PC-3 (cell line): ENCODE measurements at regions of chr2 and their contacts with region 1.

Region 1: DNA sequence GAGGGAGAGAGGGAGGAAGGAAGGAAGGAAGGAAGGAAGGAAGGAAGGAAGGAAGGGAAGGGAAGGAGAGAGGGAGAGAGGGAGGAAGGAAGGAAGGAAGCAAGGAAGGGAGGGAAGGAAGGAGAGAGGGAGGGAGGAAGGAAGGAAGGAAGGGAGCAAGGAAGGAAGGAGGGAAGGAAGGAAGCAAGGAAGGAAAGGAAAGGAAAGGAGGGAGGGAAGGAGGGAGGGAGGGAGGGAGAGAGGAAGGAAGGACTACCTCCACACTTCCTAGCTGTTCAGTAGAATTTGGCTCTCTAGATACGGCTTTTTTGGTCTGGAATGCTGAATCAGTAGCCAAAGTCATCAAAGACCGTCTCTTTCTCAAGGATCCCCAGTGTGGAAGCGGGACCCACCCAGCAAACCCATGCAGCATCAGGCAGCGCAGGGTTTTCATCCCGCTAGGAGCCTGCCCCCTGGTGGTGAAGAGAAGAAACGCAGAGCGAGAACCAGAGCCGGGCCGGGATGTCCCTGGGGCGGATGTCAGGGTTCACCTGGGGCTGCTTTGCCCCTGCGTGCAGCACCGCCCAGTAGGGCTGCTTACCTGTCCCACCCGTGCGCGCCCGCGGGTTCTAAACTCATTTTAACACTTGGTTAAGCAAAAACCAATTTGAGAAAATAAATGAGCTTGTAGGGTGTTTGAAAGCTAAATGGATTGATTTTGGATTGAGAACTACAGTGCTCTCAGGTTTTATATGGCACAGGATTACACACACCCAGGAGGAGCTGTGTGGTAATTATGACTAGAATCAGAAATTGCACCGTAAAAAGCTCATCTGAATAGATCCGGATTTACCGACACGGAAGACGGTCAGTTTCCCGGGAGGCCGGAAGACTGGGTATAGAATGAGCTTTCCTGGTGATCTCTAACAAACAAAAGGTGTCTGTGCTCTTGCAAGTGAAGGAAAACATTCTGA is 48.1 kb upstream of the ARL4C start:
- DNase-seq: peak; percentile 78
- ATAC-seq: peak; percentile 91
- H3K4me3 ChIP-seq: no peak overlapping the region
- H3K27ac ChIP-seq: no peak overlapping the region
- H3K4me1 ChIP-seq: peaks cover 5% of the 10 kb centered on the region; the same call in 1 of the 2 replicates
- H3K27me3 ChIP-seq: no peaks in the 10 kb centered on the region
- CTCF ChIP-seq: peak; percentile 86

Region 2: GRCh38 chr2:235116885-235117492 is 572.1 kb after region 1 on chr2:
- CTCF ChIA-PET with region 1: interaction called, 14 read pairs
- POLR2A ChIA-PET with region 1: no interaction called
- intact Hi-C with region 1: no loop called
- DNase-seq: peak; percentile 76
- ATAC-seq: no peak; the same call in 1 of the 2 replicates
- H3K4me3 ChIP-seq: no peak overlapping the region
- H3K27ac ChIP-seq: no peak overlapping the region
- H3K4me1 ChIP-seq: no peaks in the 10 kb centered on the region
- H3K27me3 ChIP-seq: no peaks in the 10 kb centered on the region
- CTCF ChIP-seq: peak; percentile 80